PC-3 (cell line): ENCODE measurements at regions of chr1 and their contacts with region 1.

Region 1: DNA sequence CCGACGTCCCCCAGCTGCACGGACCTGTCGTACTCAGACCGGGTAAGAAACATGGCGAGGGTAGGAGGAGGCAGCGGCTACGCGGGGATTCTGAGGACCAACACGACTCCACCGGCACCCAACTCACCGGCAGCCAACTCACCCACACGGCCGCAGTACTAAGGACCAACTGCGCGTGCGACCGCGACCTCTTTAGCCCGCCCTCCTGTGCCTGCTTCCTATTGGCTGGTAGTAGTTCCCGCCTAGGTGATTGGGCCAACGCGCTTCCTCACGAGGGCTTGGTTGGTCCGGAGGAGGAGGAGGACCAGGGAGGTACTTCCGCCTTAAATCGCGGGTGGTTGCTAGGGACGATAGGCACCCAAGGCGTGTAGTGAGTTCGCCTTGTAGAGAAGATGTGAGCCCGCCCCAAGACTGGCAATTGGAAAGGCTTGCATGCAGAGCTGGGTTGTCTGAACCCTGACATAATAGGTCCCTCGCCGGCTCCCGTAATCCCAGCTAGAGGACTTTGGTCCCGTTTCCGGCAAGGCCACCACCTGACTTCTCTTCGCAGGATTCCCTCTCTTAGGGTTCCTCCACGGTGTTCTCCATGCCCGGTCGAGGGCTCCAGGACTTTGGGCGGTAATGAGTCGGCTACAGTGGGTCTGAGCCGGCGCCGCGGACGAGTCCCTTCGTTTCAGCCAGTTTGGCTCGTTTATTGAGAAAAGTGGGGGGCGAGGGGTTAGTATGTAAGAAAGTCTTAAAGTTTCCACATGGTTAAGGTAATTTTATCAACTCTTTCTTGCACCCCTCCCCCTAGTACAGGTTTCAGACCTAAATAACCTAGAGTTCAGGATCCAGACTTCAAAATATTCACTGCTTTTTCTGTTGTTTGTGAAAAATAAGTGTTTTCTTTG is at the start of gene PSMA5:
- DNase-seq: peak; percentile 99
- ATAC-seq: peak; percentile 97
- H3K4me3 ChIP-seq: peak within 1 kb of the TSS; percentile 97
- H3K27ac ChIP-seq: peak within 1 kb of the TSS; percentile 88
- H3K4me1 ChIP-seq: peaks cover 23% of the 10 kb centered on the region
- H3K27me3 ChIP-seq: no peaks in the 10 kb centered on the region
- CTCF ChIP-seq: no peak
- total RNA-seq, gene PSMA5: 84.1 and 86.9 TPM in 2 replicates

Region 2: DNA sequence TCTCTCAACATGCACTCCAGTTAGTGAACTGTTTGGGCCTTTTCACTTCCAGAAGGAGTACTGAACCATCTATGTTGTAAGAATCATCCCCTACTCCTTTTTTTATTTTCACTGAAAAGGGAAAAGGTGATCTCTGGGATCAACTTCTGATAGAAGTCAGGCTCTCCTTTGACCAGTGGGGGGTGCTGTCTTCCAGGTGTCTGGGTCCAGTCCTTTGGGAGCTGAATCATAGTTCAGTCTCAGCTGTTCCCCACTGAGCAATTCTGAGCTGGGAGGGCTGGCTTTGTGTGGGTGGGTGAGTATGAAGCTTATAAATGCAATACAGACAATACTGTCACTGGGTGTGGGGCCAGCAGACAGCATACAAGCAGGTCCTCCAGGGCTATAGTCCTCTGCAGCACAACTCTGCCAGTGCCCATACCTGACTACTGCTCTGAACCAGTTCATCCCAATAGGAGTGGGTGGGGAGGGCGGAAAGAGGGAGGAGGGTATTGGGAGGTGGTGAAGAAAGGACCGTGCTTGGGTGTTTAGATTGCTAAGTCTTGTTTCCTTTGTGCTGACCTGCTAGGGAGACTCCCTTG is 225.3 kb before region 1 on chr1:
- CTCF ChIA-PET with region 1: no interaction called
- POLR2A ChIA-PET with region 1: no interaction called
- intact Hi-C with region 1: no loop called
- DNase-seq: peak; percentile 87
- ATAC-seq: peak; percentile 28
- H3K4me3 ChIP-seq: no peak overlapping the region
- H3K27ac ChIP-seq: no peak overlapping the region
- H3K4me1 ChIP-seq: peaks cover 27% of the 10 kb centered on the region
- H3K27me3 ChIP-seq: no peaks in the 10 kb centered on the region
- CTCF ChIP-seq: peak; percentile 94

Region 3: DNA sequence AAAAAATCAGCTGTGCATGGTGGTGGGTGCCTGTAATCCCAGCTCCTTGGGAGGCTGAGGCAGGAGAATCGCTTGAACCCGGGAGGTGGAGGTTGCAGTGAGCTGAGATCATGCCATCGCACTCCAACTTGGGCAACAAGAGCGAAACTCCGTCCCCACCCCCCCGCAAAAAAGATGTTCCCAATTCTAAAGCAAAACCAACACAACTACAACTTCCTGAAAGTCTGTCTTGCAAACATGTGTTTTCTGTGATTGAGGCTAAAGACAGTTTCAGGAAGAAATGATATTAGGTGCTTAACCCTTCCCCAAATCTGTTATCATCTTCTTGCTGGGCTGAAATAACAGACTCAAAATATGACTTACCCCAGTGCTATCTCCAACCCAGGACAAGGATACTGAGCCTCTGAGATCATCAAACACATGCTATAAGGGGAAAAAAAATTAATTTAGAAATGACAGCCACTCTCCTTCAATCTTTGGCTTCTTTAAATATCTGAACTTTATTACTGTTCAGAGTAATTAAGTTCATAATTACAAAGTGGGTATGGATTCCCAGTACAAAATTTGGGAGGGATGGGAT is 57.3 kb before region 1 on chr1:
- CTCF ChIA-PET with region 1: no interaction called
- POLR2A ChIA-PET with region 1: no interaction called
- intact Hi-C with region 1: no loop called
- DNase-seq: no peak
- ATAC-seq: no peak
- H3K4me3 ChIP-seq: no peak overlapping the region
- H3K27ac ChIP-seq: no peak overlapping the region
- H3K4me1 ChIP-seq: peaks cover 26% of the 10 kb centered on the region
- H3K27me3 ChIP-seq: no peaks in the 10 kb centered on the region
- CTCF ChIP-seq: no peak

Region 4: DNA sequence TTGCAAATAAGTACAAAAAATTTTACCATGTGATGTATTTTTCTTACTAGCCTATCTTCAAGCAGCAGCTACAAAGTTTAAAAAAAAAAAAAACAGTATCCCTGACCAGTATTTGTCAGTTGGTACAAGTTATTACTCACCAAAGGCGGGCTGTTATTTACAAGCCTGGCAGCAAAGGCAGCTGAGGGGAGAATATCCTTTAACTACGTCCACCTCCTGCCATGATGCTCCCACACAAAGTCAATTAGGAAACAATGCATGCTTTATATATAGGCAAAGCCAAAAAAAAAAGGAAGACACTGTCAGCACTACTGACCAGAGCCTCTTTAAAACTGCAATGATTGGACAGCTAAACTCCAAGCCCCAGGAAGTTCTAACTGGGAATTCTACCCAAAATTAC is 14.0 kb before region 1 on chr1:
- CTCF ChIA-PET with region 1: no interaction called
- POLR2A ChIA-PET with region 1: no interaction called
- intact Hi-C with region 1: loop called (anchors 1 kb)
- DNase-seq: no peak
- ATAC-seq: peak; percentile 70
- H3K4me3 ChIP-seq: no peak overlapping the region
- H3K27ac ChIP-seq: no peak overlapping the region
- H3K4me1 ChIP-seq: no peaks in the 10 kb centered on the region
- H3K27me3 ChIP-seq: no peaks in the 10 kb centered on the region
- CTCF ChIP-seq: no peak

Region 5: GRCh38 chr1:109438798-109439297 is 12.3 kb after region 1 on chr1:
- CTCF ChIA-PET with region 1: no interaction called
- POLR2A ChIA-PET with region 1: interaction called, 21 read pairs
- intact Hi-C with region 1: no loop called
- DNase-seq: peak; percentile 39
- ATAC-seq: no peak
- H3K4me3 ChIP-seq: no peak overlapping the region
- H3K27ac ChIP-seq: no peak overlapping the region
- H3K4me1 ChIP-seq: peaks cover 12% of the 10 kb centered on the region; the same call in 1 of the 2 replicates
- H3K27me3 ChIP-seq: peaks cover 5% of the 10 kb centered on the region; the same call in 1 of the 2 replicates
- CTCF ChIP-seq: no peak

Region 6: DNA sequence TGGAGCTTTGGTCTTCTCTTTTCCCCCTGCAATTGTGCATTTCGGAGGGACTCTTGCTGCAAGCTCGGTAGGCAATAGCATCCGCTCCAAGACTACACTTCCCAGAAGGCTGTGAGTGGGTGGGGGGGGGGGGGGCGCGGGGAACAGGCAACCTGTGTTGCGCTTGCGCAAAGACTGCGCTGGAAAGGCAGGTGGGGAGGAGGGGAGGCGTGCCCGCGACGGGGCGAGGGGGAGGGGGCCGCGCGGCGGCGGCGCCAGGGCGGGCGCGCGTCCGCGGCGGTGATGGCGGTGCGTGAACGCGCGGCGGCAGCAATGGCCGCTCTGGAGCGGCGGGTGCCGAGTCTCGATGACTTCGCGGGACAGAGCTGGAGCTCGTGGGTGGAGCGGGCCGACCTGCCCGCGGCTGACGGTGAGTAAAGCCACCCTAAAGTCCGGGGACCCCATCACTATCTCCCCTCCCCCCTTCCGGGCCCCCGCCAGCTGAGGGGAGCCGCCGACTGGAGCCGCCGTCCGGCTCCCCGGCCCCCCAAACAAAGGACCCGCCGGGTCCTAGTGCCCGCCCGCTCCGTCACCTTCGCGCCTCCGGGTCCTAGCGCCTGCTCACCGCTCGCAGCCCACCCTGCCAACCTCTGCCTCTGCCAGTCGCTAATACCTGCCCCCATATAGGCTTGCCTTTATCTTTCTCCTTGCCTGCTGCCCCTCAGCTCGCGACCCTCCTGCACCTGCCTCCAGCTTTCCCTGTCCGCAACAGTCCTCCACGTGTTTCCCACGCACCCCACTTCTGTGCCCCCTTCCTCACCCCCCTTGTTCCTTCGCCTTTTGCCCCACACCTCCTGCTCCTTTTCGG is 57.4 kb after region 1 on chr1 and contains the start of gene ATXN7L2:
- CTCF ChIA-PET with region 1: interaction called, 4 read pairs
- POLR2A ChIA-PET with region 1: interaction called, 12 read pairs
- intact Hi-C with region 1: loop called (anchors 5 kb)
- DNase-seq: peak; percentile 86
- ATAC-seq: peak; percentile 80
- H3K4me3 ChIP-seq: peak within 1 kb of the TSS; percentile 91
- H3K27ac ChIP-seq: peak within 1 kb of the TSS; percentile 51
- H3K4me1 ChIP-seq: peaks cover 17% of the 10 kb centered on the region
- H3K27me3 ChIP-seq: peaks cover 12% of the 10 kb centered on the region
- CTCF ChIP-seq: no peak
- total RNA-seq, gene ATXN7L2: 9.2 and 9.4 TPM in 2 replicates